T-cell (primary cell): ENCODE measurements at regions of chr7 and their contacts with region 1.

Region 1: DNA sequence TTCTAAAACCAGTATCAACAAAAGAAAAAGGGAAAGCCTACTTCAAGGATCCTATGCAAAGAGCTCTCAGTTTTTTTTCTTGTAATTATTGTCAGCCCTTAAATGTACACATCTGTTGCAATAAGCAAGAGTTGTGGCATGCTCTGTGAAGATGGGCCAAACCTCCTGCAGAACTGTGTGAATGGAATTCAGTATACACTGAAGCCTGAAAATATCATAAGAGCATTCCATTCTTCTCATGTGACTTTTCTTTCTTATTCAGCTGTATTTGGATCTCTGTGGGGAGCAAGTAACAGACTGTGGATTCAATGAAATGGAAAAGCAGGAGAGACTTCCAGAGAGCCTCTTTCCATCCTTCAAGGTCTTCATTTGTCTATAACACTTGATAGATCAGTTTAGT is 130.7 kb downstream of the SAMD9 start:
- DNase-seq: no peak
- ATAC-seq: no peak
- H3K4me3 ChIP-seq: no peak overlapping the region
- H3K4me3 Mint-ChIP-seq: no peak overlapping the region
- H3K27ac ChIP-seq: no peak overlapping the region
- H3K27ac Mint-ChIP-seq: no peak overlapping the region
- H3K4me1 ChIP-seq: no peaks in the 10 kb centered on the region
- H3K4me1 Mint-ChIP-seq: no peaks in the 10 kb centered on the region
- H3K27me3 ChIP-seq: no peaks in the 10 kb centered on the region
- H3K27me3 Mint-ChIP-seq: peaks cover 4 to 7% of the 10 kb centered on the region in 2 donors

Region 2: GRCh38 chr7:92698237-92698841 is 288.8 kb before region 1 on chr7:
- CTCF ChIA-PET with region 1: interaction called in 1 of 2 experiments, 13 read pairs
- POLR2A ChIA-PET with region 1: no interaction called
- DNase-seq: no peak
- ATAC-seq: no peak
- H3K4me3 ChIP-seq: no peak overlapping the region
- H3K4me3 Mint-ChIP-seq: no peak overlapping the region
- H3K27ac ChIP-seq: no peak overlapping the region
- H3K27ac Mint-ChIP-seq: no peak overlapping the region
- H3K4me1 ChIP-seq: no peaks in the 10 kb centered on the region
- H3K4me1 Mint-ChIP-seq: peaks cover 16 to 38% (median 31%) of the 10 kb centered on the region in 3 donors
- H3K27me3 ChIP-seq: no peaks in the 10 kb centered on the region
- H3K27me3 Mint-ChIP-seq: no peaks in the 10 kb centered on the region

Region 3: GRCh38 chr7:92933810-92934449 is 53.2 kb before region 1 on chr7:
- CTCF ChIA-PET with region 1: no interaction called
- POLR2A ChIA-PET with region 1: no interaction called
- DNase-seq: no peak
- ATAC-seq: no peak
- H3K4me3 ChIP-seq: no peak overlapping the region
- H3K4me3 Mint-ChIP-seq: no peak overlapping the region
- H3K27ac ChIP-seq: no peak overlapping the region
- H3K27ac Mint-ChIP-seq: no peak overlapping the region
- H3K4me1 ChIP-seq: no peaks in the 10 kb centered on the region
- H3K4me1 Mint-ChIP-seq: no peaks in the 10 kb centered on the region
- H3K27me3 ChIP-seq: peaks cover 0 to 2% of the 10 kb centered on the region in 2 experiments
- H3K27me3 Mint-ChIP-seq: peaks cover 0 to 2% of the 10 kb centered on the region in 2 donors

Region 4: GRCh38 chr7:92968502-92968901 is 18.6 kb before region 1 on chr7:
- CTCF ChIA-PET with region 1: no interaction called
- POLR2A ChIA-PET with region 1: no interaction called
- DNase-seq: no peak
- ATAC-seq: no peak
- H3K4me3 ChIP-seq: no peak overlapping the region
- H3K4me3 Mint-ChIP-seq: no peak overlapping the region
- H3K27ac ChIP-seq: no peak overlapping the region
- H3K27ac Mint-ChIP-seq: no peak overlapping the region
- H3K4me1 ChIP-seq: no peaks in the 10 kb centered on the region
- H3K4me1 Mint-ChIP-seq: no peaks in the 10 kb centered on the region
- H3K27me3 ChIP-seq: peaks cover 0 to 4% of the 10 kb centered on the region in 2 experiments
- H3K27me3 Mint-ChIP-seq: no peaks in the 10 kb centered on the region